CD8-positive, alpha-beta T cell (primary cell): ENCODE measurements at regions of chr3 and their contacts with region 1.

Region 1: GRCh38 chr3:40524568-40525285 is at the start of gene ZNF621:
- DNase-seq: peak; percentile 69 to 90 (median 84)
- ATAC-seq: peak; percentile 97
- H3K4me3 ChIP-seq: peak within 1 kb of the TSS; percentile 76 to 97
- H3K4me3 Mint-ChIP-seq: peak within 1 kb of the TSS; percentile 94
- H3K27ac ChIP-seq: peak within 1 kb of the TSS; percentile 80 to 94
- H3K27ac Mint-ChIP-seq: peak within 1 kb of the TSS; percentile 97
- H3K4me1 ChIP-seq: peaks cover 12% of the 10 kb centered on the region
- H3K4me1 Mint-ChIP-seq: peaks cover 38% of the 10 kb centered on the region
- H3K27me3 ChIP-seq: no peaks in the 10 kb centered on the region
- H3K27me3 Mint-ChIP-seq: no peaks in the 10 kb centered on the region
- CTCF ChIP-seq: no peak
- total RNA-seq, gene ZNF621: 7.1 to 9.7 TPM

Region 2: GRCh38 chr3:40329071-40329470 is 195.7 kb before region 1 on chr3:
- CTCF ChIA-PET with region 1: no interaction called
- POLR2A ChIA-PET with region 1: no interaction called
- intact Hi-C with region 1: loop called in 1 of 2 experiments (anchors 5 kb)
- DNase-seq: no peak
- ATAC-seq: no peak
- H3K4me3 ChIP-seq: no peak overlapping the region
- H3K4me3 Mint-ChIP-seq: no peak overlapping the region
- H3K27ac ChIP-seq: no peak overlapping the region
- H3K27ac Mint-ChIP-seq: no peak overlapping the region
- H3K4me1 ChIP-seq: no peaks in the 10 kb centered on the region
- H3K4me1 Mint-ChIP-seq: peaks cover 3% of the 10 kb centered on the region
- H3K27me3 ChIP-seq: no peaks in the 10 kb centered on the region
- H3K27me3 Mint-ChIP-seq: peaks cover 3% of the 10 kb centered on the region
- CTCF ChIP-seq: no peak

Region 3: GRCh38 chr3:40476478-40477470 is 48.0 kb before region 1 on chr3 and contains the start of gene ZNF619:
- CTCF ChIA-PET with region 1: no interaction called
- POLR2A ChIA-PET with region 1: interaction called, 6 read pairs
- intact Hi-C with region 1: loop called (anchors 1 kb)
- DNase-seq: peak; percentile 27 to 82 (median 57)
- ATAC-seq: peak; percentile 91
- H3K4me3 ChIP-seq: peak within 1 kb of the TSS; percentile 78 to 90
- H3K4me3 Mint-ChIP-seq: peak within 1 kb of the TSS; percentile 86
- H3K27ac ChIP-seq: peak within 1 kb of the TSS; percentile 65 to 79
- H3K27ac Mint-ChIP-seq: peak within 1 kb of the TSS; percentile 84
- H3K4me1 ChIP-seq: peaks cover 10% of the 10 kb centered on the region
- H3K4me1 Mint-ChIP-seq: peaks cover 25% of the 10 kb centered on the region
- H3K27me3 ChIP-seq: no peaks in the 10 kb centered on the region
- H3K27me3 Mint-ChIP-seq: no peaks in the 10 kb centered on the region
- CTCF ChIP-seq: no peak
- total RNA-seq, gene ZNF619: 2.2 to 4.1 TPM

Region 4: DNA sequence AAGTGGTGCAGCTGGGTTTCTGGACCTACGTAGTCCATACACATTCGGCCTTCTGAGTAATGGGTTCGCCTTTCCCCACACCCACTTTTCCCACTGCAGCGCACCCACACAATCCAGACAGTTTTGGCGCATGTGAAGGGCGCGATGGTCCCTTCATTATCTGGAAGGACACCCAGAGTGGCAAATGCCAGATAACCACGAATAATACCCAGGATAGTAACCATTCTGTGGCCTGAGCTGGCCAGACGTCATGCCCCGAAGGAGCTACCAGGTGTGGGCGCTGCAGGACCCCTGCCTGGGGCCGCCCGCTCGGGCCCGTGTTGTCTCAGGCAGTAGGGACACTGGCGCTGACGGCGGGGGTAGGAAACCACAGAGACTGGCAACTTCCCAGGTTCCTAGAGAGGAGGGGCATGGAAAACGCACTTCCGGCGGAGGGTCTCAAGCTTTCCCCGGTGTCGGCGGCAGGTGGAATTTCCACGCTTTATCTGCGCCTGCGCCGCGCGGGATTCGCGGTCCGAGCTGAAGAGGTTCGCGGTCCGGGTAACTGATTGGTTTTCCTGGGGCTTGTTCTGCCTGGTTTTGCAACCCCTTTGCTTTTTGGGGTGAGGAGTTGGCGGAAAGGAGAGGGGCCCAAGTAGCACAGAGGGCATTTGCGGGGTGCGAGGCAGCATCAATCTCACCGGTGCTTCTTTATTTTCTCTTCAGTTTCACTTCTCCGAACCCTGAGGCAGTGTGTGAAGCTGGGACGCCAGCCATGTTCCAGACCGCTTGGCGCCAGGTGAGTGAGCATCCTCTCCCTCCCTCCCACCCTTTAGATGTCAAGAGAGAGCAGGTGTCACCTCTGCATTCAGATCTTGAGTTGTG is 18.9 kb before region 1 on chr3 and contains the start of gene ZNF620:
- CTCF ChIA-PET with region 1: interaction called, 10 read pairs
- POLR2A ChIA-PET with region 1: interaction called, 4 read pairs
- intact Hi-C with region 1: loop called in 1 of 2 experiments (anchors 1 kb)
- DNase-seq: peak; percentile 1 to 74 (median 48)
- ATAC-seq: peak; percentile 81
- H3K4me3 ChIP-seq: peak within 1 kb of the TSS; percentile 71 to 83
- H3K4me3 Mint-ChIP-seq: peak within 1 kb of the TSS; percentile 97
- H3K27ac ChIP-seq: peak within 1 kb of the TSS; percentile 32 to 46
- H3K27ac Mint-ChIP-seq: peak within 1 kb of the TSS; percentile 89
- H3K4me1 ChIP-seq: peaks cover 6% of the 10 kb centered on the region
- H3K4me1 Mint-ChIP-seq: peaks cover 15% of the 10 kb centered on the region
- H3K27me3 ChIP-seq: no peaks in the 10 kb centered on the region
- H3K27me3 Mint-ChIP-seq: no peaks in the 10 kb centered on the region
- CTCF ChIP-seq: peak; percentile 18
- total RNA-seq, gene ZNF620: 0.84 to 1.9 TPM

Region 5: GRCh38 chr3:41961750-41962679 is 1437.3 kb after region 1 on chr3 and contains the start of gene ULK4:
- CTCF ChIA-PET with region 1: no interaction called
- POLR2A ChIA-PET with region 1: no interaction called
- intact Hi-C with region 1: loop called (anchors 1 to 2 kb)
- DNase-seq: peak; percentile 89 to 99 (median 95)
- ATAC-seq: peak; percentile 84
- H3K4me3 ChIP-seq: peak within 1 kb of the TSS; percentile 84 to 99
- H3K4me3 Mint-ChIP-seq: peak within 1 kb of the TSS; percentile 100
- H3K27ac ChIP-seq: peak within 1 kb of the TSS; percentile 85 to 96
- H3K27ac Mint-ChIP-seq: peak within 1 kb of the TSS; percentile 99
- H3K4me1 ChIP-seq: peaks cover 15% of the 10 kb centered on the region
- H3K4me1 Mint-ChIP-seq: peaks cover 24% of the 10 kb centered on the region
- H3K27me3 ChIP-seq: no peaks in the 10 kb centered on the region
- H3K27me3 Mint-ChIP-seq: no peaks in the 10 kb centered on the region
- CTCF ChIP-seq: no peak
- total RNA-seq, gene ULK4: 11.9 to 15.1 TPM